ENCODE measurements at regions of chr13 and their contacts with region 1.

Region 1: DNA sequence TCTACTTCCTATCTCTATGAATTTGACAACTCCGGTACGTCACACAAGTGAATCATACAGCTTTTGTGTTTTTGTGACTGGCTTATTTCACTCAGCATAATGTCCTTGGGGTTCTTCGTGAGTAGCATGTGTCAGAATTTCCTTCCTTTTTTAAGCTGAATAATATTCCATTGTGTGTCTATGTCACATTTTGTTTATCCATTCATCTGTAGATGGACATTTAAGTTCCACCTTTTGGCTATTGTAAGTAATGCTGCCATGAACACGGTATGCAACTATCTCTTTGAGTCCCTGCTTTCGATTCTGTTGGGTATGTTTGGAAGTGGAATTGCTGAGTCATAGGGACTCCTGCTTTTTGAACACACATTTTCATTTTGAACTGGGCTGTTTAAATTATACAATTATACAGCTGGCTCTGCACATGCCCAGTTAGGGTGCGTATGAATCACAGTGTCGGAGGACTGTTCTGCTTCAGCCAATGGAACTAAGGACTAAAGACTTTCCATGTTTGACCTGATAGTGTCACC is 43.0 kb upstream of the C13orf42 start:
- DNase-seq: no peak
- ATAC-seq: peak in 2 of 4 donors; percentile 16 to 45
- H3K4me3 ChIP-seq: no peak overlapping the region
- H3K27ac ChIP-seq: no peak overlapping the region
- H3K4me1 ChIP-seq: peaks cover 0 to 6% (median 0%) of the 10 kb centered on the region in 12 donors
- H3K27me3 ChIP-seq: peaks cover 0 to 4% (median 0%) of the 10 kb centered on the region in 9 donors
- CTCF ChIP-seq: no peak
- POLR2A ChIP-seq: no peak

Region 2: GRCh38 chr13:51324714-51325420 is 170.8 kb after region 1 on chr13:
- intact Hi-C with region 1: no loop called
- DNase-seq: no peak
- ATAC-seq: no peak
- H3K4me3 ChIP-seq: no peak overlapping the region
- H3K27ac ChIP-seq: no peak overlapping the region
- H3K4me1 ChIP-seq: no peaks in the 10 kb centered on the region
- H3K27me3 ChIP-seq: no peaks in the 10 kb centered on the region
- CTCF ChIP-seq: no peak
- POLR2A ChIP-seq: no peak

Region 3: DNA sequence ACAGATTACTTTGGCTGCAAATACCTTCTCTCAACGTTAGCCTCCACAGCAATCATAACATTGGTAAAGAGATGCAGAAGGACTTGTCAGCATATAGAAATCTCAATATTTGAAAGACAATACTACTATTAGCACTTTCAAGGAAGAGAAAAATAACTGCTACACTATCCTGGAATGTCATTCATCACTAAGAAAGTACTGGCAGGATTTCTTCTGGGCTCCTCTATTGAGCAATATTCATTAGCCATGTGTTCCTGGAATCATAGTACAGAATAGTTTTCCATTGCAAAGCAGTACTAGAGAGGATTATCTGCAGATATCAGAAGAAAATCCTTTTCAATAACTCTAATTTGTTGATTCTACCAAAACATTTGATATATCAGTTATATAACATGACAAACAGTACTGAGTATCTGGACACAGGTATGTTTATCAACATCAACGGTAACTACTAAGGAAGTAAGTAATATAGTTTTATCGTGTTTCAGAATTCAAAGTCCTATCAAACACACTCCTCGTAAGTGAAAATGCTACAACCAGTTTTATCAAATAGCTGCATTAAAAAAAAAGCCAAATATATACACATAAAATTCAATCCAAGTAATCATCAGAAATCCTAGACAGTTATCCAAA is 271.4 kb after region 1 on chr13:
- intact Hi-C with region 1: loop called in 1 of 10 experiments (anchors 10 kb)
- DNase-seq: no peak
- ATAC-seq: peak in 3 of 4 donors; percentile 76 to 88 (median 82)
- H3K4me3 ChIP-seq: no peak overlapping the region
- H3K27ac ChIP-seq: no peak overlapping the region
- H3K4me1 ChIP-seq: peaks cover 0 to 55% (median 18%) of the 10 kb centered on the region in 12 donors
- H3K27me3 ChIP-seq: no peaks in the 10 kb centered on the region
- CTCF ChIP-seq: no peak
- POLR2A ChIP-seq: no peak